ENCODE measurements at regions of chr5 and their contacts with region 1.

Region 1: GRCh38 chr5:90421136-90421535 is 11.6 kb upstream of the CETN3 start:
- DNase-seq: peak in 1 of 3 donors; percentile 48
- ATAC-seq: peak; percentile 86 to 96 (median 94)
- H3K4me3 ChIP-seq: no peak overlapping the region
- H3K27ac ChIP-seq: no peak overlapping the region
- H3K4me1 ChIP-seq: no peaks in the 10 kb centered on the region
- H3K27me3 ChIP-seq: no peaks in the 10 kb centered on the region
- CTCF ChIP-seq: peak in 3 of 4 donors; percentile 20 to 44 (median 24)
- POLR2A ChIP-seq: no peak

Region 2: GRCh38 chr5:90612919-90613318 is 191.8 kb after region 1 on chr5:
- intact Hi-C with region 1: loop called in 1 of 2 experiments (anchors 10 kb)
- DNase-seq: no peak
- ATAC-seq: no peak
- H3K4me3 ChIP-seq: no peak overlapping the region
- H3K27ac ChIP-seq: no peak overlapping the region
- H3K4me1 ChIP-seq: no peaks in the 10 kb centered on the region
- H3K27me3 ChIP-seq: no peaks in the 10 kb centered on the region
- CTCF ChIP-seq: no peak
- POLR2A ChIP-seq: no peak

Measured in right lobe of liver (tissue), 6 donors.